ENCODE measurements at regions of chr12 and their contacts with region 1.

Region 1: DNA sequence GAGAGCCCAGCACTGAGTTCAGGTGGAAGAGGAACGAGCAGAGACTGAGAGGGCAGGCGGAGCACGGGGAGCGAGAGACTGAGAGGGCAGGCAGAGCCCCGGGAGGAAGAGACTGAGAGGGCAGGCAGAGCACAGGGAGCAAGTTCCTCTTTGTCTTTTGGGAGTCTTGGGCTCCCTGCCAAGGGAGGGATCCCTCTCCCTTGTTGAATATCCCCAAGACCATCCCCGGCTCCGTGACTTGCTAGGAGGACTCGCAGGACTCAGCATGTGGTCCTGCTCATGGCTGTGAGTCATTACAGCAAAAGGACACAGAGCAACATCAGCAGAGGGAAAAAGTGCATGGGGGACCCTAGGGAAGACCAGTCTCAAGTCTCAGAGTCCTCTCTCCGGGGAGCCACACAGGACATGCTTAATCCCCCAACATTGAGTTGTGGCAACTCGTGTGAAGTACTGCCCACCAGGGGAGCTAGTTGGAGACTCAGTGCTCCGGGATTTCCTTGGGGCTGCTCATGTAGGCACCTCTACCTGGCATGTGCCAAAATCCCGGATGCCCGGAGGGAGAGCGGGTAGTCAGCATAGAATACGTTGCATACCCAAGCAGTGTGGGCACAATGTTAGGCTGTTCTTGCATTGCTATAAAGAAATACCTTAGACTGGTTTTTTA is 81.0 kb downstream of the CCDC92 start:
- DNase-seq: no peak
- H3K4me3 ChIP-seq: no peak overlapping the region
- H3K27ac ChIP-seq: no peak overlapping the region
- H3K4me1 ChIP-seq: peaks cover 0 to 6% (median 1%) of the 10 kb centered on the region in 4 experiments; a peak in 4 of 7 replicates
- H3K27me3 ChIP-seq: 0 out of 7 replicates have a peak, but pooled peaks cover 0 to 3% (median 0%) of the 10 kb centered on the region in 4 experiments
- CTCF ChIP-seq: peak in 1 of 3 experiments; percentile 17; a peak in 1 of 4 replicates
- EP300 ChIP-seq: no peak
- POLR2A ChIP-seq: no peak
- RAD21 ChIP-seq: no peak

Region 2: GRCh38 chr12:123905319-123905925 is 13.8 kb after region 1 on chr12:
- CTCF ChIA-PET with region 1: interaction called, 35 read pairs
- POLR2A ChIA-PET with region 1: no interaction called
- DNase-seq: peak in 1 of 2 experiments; percentile 68
- H3K4me3 ChIP-seq: no peak overlapping the region
- H3K27ac ChIP-seq: no peak overlapping the region
- H3K4me1 ChIP-seq: peaks cover 0 to 7% (median 4%) of the 10 kb centered on the region in 4 experiments; a peak in 3 of 7 replicates
- H3K27me3 ChIP-seq: no peaks in the 10 kb centered on the region
- CTCF ChIP-seq: peak; percentile 1 to 76 (median 59)
- EP300 ChIP-seq: no peak
- POLR2A ChIP-seq: no peak
- RAD21 ChIP-seq: peak; percentile 40 to 46; a peak in 3 of 4 replicates

Region 3: DNA sequence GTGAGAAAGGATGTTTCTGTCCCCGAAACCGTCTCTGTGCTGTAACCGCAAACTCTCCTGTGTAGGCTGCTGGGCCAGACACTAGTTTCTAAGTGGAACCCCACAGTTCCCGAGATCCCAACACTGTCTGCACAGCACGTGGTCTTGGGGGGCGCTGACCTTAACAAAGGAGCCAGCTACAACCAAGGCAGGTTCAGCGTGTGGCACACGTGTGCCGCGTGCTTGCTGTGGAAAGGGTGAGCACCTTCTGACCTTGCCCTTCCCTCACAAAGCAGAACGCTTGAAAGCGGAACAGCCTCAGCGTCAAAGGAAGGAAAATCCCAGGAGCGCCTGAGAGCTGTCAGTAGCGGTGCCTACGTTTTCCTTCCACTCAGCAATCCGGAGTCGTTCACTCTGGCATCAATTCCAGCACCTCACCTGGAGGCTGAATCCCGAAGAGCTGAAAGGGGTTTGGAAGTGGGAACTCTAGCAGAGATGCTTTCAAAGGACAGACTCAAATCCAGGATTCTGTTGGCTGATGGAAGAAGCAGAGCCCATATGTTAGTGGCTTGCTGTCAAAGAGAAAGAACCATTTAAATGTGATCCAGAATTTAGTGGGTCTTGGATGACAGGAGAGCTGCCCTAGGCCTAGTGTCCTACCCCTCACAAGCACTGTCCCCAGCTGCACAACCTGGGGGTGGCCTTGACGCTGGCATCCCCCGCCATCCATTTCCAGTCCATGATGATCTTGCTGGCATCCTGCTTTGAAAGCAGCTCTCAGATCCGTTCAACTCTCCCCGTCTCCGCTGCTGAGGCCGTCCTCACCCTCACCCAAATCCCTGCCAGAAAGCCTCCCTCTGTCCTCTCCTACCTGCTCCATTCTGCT is 53.9 kb after region 1 on chr12:
- CTCF ChIA-PET with region 1: no interaction called
- POLR2A ChIA-PET with region 1: no interaction called
- DNase-seq: no peak
- H3K4me3 ChIP-seq: no peak overlapping the region
- H3K27ac ChIP-seq: no peak overlapping the region
- H3K4me1 ChIP-seq: no peaks in the 10 kb centered on the region
- H3K27me3 ChIP-seq: peaks cover 0 to 9% (median 3%) of the 10 kb centered on the region in 4 experiments; a peak in 3 of 7 replicates
- CTCF ChIP-seq: no peak
- EP300 ChIP-seq: no peak
- POLR2A ChIP-seq: no peak
- RAD21 ChIP-seq: no peak

Measured in H1 (cell line).